Right cardiac atrium (tissue), 5 donors: ENCODE measurements at regions of chr7 and their contacts with region 1.

Region 1: DNA sequence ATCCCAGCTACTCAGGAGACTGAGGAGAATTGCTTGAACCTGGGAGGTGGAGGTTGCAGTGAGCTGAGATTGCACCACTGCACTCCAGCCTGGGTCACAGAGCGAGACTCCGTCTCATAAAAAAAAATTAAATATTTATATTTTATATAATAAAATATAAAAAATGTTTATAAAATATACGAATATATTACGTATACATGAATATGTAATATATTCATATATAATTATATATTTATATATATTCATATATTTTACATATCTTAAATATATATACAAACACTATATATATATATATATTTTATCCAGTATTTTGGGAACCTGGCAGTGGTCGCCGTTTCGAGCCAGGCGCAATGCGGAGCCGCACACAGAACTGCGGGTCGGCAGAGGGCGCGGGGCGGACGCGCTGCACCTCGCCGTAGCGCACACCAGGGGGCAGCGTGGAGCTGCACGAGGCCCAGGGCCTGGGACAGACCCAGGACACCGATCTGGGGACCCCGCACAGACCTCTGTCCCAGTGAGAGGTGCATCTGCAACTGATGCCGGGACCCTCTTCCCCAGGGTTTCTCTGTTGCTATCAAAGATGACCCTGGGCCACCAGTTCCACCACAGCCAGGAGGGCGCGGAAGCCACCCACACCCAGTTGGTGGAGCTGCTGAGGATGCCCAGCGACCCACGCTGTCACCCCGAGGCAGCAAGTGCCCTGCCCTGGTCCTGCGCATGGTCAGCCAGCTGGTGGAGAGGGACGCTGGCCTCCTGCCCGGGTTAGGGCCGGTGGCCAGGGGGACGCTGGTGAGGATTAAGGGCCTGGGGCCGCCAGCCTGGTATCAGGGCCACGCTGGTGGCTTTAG is 22.7 kb downstream of the AP5Z1 start:
- DNase-seq: peak; percentile 67 to 88 (median 83)
- ATAC-seq: peak; percentile 62 to 72
- H3K4me3 ChIP-seq: no peak overlapping the region
- H3K27ac ChIP-seq: no peak overlapping the region
- H3K4me1 ChIP-seq: no peaks in the 10 kb centered on the region
- H3K27me3 ChIP-seq: no peaks in the 10 kb centered on the region

Region 2: DNA sequence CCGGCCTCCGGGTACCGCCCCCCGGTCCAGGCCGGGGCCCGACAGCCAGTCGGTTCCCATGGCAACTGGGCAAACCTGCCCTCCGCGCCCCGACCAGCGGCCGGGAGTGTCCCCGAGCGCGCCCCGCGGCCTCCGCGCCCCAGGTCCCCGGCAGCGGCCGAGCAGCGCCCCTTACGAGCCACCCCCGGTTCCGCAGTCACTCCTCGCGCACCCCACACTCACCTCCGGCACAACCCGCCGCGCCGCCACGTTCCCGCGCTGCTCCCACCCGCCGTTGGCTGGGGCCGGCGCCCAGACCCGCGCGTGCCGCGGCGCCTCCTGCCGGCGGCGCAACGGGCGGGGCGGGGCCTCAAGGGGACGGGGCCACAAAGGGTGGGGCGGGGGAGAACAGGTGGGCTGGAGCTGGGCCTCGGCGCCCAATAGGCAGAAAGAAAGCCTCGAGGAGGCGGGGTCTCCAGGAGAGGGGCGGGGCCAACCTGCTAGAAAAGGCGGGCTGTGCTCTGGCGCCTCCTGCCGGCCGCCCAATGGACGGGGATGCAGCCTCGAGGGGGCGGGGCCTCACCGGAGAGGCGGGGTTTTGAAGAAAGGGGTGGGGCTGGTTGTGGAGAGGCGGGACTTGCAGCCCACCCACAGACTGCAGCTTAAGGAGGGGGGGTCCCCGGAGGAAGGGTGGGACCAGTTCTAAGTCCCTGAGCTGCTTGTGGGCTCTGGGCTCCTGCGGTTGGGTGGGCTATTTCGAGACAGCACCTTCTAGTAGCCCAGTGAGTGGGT is 85.5 kb after region 1 on chr7 and contains the start of gene RADIL:
- intact Hi-C with region 1: loop called in 3 of 4 experiments (anchors 5 to 10 kb)
- DNase-seq: peak; percentile 97 to 99 (median 99)
- ATAC-seq: peak; percentile 92 to 95
- H3K4me3 ChIP-seq: peak within 1 kb of the TSS; percentile 82
- H3K27ac ChIP-seq: peak within 1 kb of the TSS; percentile 84
- H3K4me1 ChIP-seq: no peaks in the 10 kb centered on the region
- H3K27me3 ChIP-seq: no peaks in the 10 kb centered on the region
- total RNA-seq, gene RADIL: 6.9 to 12.0 (median 9.4) TPM

Region 3: GRCh38 chr7:5077740-5078139 is 279.7 kb after region 1 on chr7:
- intact Hi-C with region 1: loop called in 2 of 4 experiments (anchors 5 to 10 kb)
- DNase-seq: no peak
- ATAC-seq: peak in 1 of 2 donors; percentile 77
- H3K4me3 ChIP-seq: no peak overlapping the region
- H3K27ac ChIP-seq: no peak overlapping the region
- H3K4me1 ChIP-seq: no peaks in the 10 kb centered on the region
- H3K27me3 ChIP-seq: no peaks in the 10 kb centered on the region

Region 4: DNA sequence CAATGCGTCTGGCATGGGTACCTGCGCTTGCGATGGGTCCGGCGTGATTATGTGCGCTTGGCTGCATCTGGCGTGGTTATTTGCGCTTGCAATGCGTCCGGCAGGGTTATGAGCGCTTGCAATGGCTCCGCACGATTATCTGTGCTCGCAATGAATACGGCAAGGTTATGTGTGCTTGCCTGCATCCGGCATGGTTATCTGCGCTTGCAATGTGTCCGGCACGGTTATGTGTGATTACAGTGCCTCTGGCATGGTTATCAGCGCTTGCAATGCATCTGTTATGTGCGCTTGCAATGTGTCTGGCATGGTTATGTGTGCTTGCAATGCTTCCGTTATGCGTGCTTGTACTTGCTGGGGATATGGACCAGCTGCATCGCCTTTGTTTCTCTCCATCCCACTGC is 285.2 kb after region 1 on chr7:
- intact Hi-C with region 1: loop called in 2 of 4 experiments (anchors 5 to 10 kb)
- DNase-seq: no peak
- ATAC-seq: no peak
- H3K4me3 ChIP-seq: no peak overlapping the region
- H3K27ac ChIP-seq: no peak overlapping the region
- H3K4me1 ChIP-seq: no peaks in the 10 kb centered on the region
- H3K27me3 ChIP-seq: no peaks in the 10 kb centered on the region